A673 (cell line): ENCODE measurements at regions of chr17 and their contacts with region 1.

Region 1: DNA sequence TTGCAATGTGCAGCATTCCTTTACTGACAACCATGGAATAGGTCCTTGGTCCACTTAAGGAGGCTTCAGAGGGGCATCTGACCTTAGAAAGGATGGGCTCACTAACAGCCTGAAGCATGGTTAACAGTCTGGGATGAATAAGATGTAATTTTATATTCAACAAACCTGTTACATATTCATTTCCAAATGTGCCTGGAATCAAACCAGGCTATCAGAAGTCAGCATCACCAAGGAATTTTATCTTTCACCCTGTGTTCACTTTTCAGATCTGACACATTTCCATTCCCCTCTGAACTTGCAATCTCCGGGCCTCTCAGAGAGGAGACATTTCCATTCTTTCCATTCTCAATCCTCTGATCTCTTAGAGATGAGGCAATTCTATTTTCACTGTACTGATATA is 62.4 kb downstream of the SNX11 start:
- DNase-seq: no peak
- H3K4me3 ChIP-seq: no peak overlapping the region
- H3K27ac ChIP-seq: no peak overlapping the region
- H3K4me1 ChIP-seq: no peaks in the 10 kb centered on the region
- H3K27me3 ChIP-seq: no peaks in the 10 kb centered on the region
- CTCF ChIP-seq: no peak

Region 2: DNA sequence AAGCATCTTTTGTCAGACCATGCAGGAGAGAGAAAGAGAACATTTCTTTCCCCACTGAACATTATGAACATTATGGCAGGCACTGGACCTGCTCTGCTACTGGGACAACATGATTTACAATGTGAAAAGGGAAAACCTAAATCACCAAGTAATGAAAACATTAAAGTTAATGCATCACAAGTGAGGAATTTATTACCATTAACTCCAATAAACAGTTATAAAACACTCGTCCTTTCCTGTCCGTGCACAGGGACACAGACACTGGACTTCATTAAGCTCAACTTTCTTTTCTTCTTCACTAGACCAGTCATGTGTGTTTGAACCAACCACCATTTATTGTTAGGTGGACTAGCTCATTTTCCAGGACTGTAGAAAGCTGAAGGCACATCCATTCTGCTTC is 33.0 kb after region 1 on chr17:
- CTCF ChIA-PET with region 1: no interaction called
- POLR2A ChIA-PET with region 1: no interaction called
- intact Hi-C with region 1: loop called (anchors 5 kb)
- DNase-seq: no peak
- H3K4me3 ChIP-seq: no peak overlapping the region
- H3K27ac ChIP-seq: no peak overlapping the region
- H3K4me1 ChIP-seq: peaks cover 7% of the 10 kb centered on the region
- H3K27me3 ChIP-seq: no peaks in the 10 kb centered on the region
- CTCF ChIP-seq: no peak